ENCODE measurements at regions of chr22 and their contacts with region 1.

Region 1: GRCh38 chr22:32474635-32475467 is at the start of gene FBXO7:
- DNase-seq: peak; percentile 89 to 95
- ATAC-seq: peak; percentile 85 to 92 (median 85)
- H3K4me3 ChIP-seq: peak within 1 kb of the TSS; percentile 55
- H3K4me3 Mint-ChIP-seq: peak within 1 kb of the TSS; percentile 94
- H3K27ac ChIP-seq: peak within 1 kb of the TSS; percentile 97
- H3K27ac Mint-ChIP-seq: peak within 1 kb of the TSS in 1 of 2 donors; percentile 91
- H3K4me1 ChIP-seq: peaks cover 14% of the 10 kb centered on the region
- H3K4me1 Mint-ChIP-seq: peaks cover 25 to 34% of the 10 kb centered on the region in 2 donors
- H3K27me3 ChIP-seq: no peaks in the 10 kb centered on the region
- H3K27me3 Mint-ChIP-seq: peaks cover 5 to 15% of the 10 kb centered on the region in 2 donors
- CTCF ChIP-seq: peak; percentile 43
- total RNA-seq, gene FBXO7: 173 to 208 (median 198) TPM

Region 2: GRCh38 chr22:31977141-31977841 is 497.6 kb before region 1 on chr22:
- intact Hi-C with region 1: loop called (anchors 1 kb)
- DNase-seq: peak; percentile 53 to 83
- ATAC-seq: peak; percentile 74 to 92 (median 92)
- H3K4me3 ChIP-seq: no peak overlapping the region
- H3K4me3 Mint-ChIP-seq: no peak overlapping the region
- H3K27ac ChIP-seq: no peak overlapping the region
- H3K27ac Mint-ChIP-seq: no peak overlapping the region
- H3K4me1 ChIP-seq: no peaks in the 10 kb centered on the region
- H3K4me1 Mint-ChIP-seq: peaks cover 0 to 6% of the 10 kb centered on the region in 2 donors
- H3K27me3 ChIP-seq: no peaks in the 10 kb centered on the region
- H3K27me3 Mint-ChIP-seq: peaks cover 3 to 11% of the 10 kb centered on the region in 2 donors
- CTCF ChIP-seq: peak; percentile 54

Region 3: GRCh38 chr22:32103658-32104315 is 371.1 kb before region 1 on chr22:
- intact Hi-C with region 1: loop called (anchors 10 kb)
- DNase-seq: peak in 1 of 2 donors; percentile 50
- ATAC-seq: no peak
- H3K4me3 ChIP-seq: no peak overlapping the region
- H3K4me3 Mint-ChIP-seq: no peak overlapping the region
- H3K27ac ChIP-seq: no peak overlapping the region
- H3K27ac Mint-ChIP-seq: no peak overlapping the region
- H3K4me1 ChIP-seq: no peaks in the 10 kb centered on the region
- H3K4me1 Mint-ChIP-seq: no peaks in the 10 kb centered on the region
- H3K27me3 ChIP-seq: no peaks in the 10 kb centered on the region
- H3K27me3 Mint-ChIP-seq: peaks cover 10 to 35% of the 10 kb centered on the region in 2 donors
- CTCF ChIP-seq: peak; percentile 65

Region 4: DNA sequence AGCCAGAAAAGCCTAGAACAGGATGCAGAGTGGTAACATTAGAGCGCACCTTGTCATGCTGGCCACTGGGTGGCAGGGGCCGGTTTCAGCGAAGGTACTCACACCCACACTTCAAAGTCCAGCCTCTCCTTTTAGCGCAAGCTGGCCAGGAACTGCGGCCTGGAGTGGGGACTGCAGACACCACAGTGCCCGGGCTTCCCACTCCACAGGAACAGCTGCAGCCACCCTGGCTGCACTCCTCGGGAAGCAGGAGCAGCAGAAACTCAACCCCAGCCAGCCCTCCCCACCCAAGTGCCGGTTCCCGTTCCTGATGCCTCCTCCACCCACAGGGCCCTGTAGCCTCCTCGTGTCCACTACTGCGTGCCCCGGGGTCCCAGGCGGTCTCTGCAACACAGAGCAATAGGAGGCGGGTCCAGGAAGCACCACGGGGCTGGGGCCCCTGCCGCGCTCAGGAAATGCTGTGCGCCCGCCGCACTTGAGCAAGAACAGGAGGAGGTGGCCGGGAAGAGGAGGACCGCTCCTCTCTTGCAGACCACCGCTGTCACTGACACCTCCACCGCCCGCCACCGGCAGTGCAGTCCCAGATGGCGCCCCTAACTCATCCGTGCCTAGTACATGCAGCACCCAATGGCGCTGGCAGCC is 272.2 kb before region 1 on chr22:
- intact Hi-C with region 1: loop called (anchors 10 kb)
- DNase-seq: peak in 1 of 2 donors; percentile 53
- ATAC-seq: no peak
- H3K4me3 ChIP-seq: no peak overlapping the region
- H3K4me3 Mint-ChIP-seq: peak overlapping the region; percentile 81
- H3K27ac ChIP-seq: no peak overlapping the region
- H3K27ac Mint-ChIP-seq: no peak overlapping the region
- H3K4me1 ChIP-seq: peaks cover 62% of the 10 kb centered on the region
- H3K4me1 Mint-ChIP-seq: peaks cover 14 to 37% of the 10 kb centered on the region in 2 donors
- H3K27me3 ChIP-seq: peaks cover 4% of the 10 kb centered on the region
- H3K27me3 Mint-ChIP-seq: peaks cover 29 to 31% of the 10 kb centered on the region in 2 donors
- CTCF ChIP-seq: peak; percentile 15

Region 5: DNA sequence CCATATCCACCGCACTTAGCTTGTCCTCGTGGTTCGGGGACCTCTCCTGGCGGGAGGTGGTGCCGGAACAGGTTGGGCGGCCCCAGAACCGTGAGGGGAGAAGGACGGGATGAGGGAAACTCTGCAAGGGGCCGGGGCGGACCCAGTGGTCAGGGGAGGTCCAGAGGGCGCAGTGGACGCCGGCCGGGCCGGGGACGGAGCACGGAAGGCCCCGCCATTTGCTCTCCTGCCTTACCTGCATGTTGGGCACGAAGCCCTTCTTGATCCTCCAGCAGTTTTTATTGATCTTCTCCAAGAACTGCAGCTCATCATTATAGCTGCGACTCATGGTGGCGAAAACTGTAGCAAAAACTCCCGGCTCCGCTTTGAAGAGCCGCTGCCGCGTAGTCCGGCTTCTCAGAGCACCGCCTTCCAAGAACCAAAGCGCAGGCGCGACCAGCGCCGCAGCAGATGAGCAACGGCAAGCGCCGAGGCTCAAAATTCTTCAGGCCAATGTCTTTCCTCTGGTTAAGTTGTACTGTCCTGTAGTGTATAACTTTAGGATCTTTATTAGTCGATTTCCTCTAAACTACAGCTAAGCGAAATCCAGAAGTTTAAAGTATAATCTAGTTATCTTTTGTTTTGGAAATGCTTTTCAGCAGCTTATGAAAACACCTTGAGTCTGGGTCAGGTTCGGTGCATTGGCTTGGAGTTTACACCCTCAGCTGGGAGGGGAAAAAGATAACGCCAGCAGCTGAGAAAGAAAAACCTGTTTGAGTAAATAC is 62.8 kb before region 1 on chr22 and contains the start of gene RTCB:
- intact Hi-C with region 1: loop called (anchors 1 kb)
- DNase-seq: peak; percentile 89 to 96
- ATAC-seq: peak; percentile 85 to 95 (median 85)
- H3K4me3 ChIP-seq: peak within 1 kb of the TSS; percentile 86
- H3K4me3 Mint-ChIP-seq: peak within 1 kb of the TSS; percentile 96
- H3K27ac ChIP-seq: peak within 1 kb of the TSS; percentile 23
- H3K27ac Mint-ChIP-seq: peak within 1 kb of the TSS; percentile 89 to 90
- H3K4me1 ChIP-seq: peaks cover 17% of the 10 kb centered on the region
- H3K4me1 Mint-ChIP-seq: peaks cover 43 to 49% of the 10 kb centered on the region in 2 donors
- H3K27me3 ChIP-seq: no peaks in the 10 kb centered on the region
- H3K27me3 Mint-ChIP-seq: peaks cover 10 to 22% of the 10 kb centered on the region in 2 donors
- CTCF ChIP-seq: no peak
- total RNA-seq, gene RTCB: 44.3 to 53.2 (median 46.6) TPM

Region 6: GRCh38 chr22:32426156-32426555 is 48.7 kb before region 1 on chr22:
- intact Hi-C with region 1: no loop called
- DNase-seq: no peak
- ATAC-seq: no peak
- H3K4me3 ChIP-seq: no peak overlapping the region
- H3K4me3 Mint-ChIP-seq: no peak overlapping the region
- H3K27ac ChIP-seq: no peak overlapping the region
- H3K27ac Mint-ChIP-seq: no peak overlapping the region
- H3K4me1 ChIP-seq: no peaks in the 10 kb centered on the region
- H3K4me1 Mint-ChIP-seq: no peaks in the 10 kb centered on the region
- H3K27me3 ChIP-seq: peaks cover 3% of the 10 kb centered on the region
- H3K27me3 Mint-ChIP-seq: peaks cover 36% of the 10 kb centered on the region in 2 donors
- CTCF ChIP-seq: no peak